ENCODE measurements at regions of chr19 and their contacts with region 1.

Region 1: GRCh38 chr19:20776083-20777076 is at the start of gene ZNF66:
- DNase-seq: peak; percentile 91
- H3K4me3 Mint-ChIP-seq: peak within 1 kb of the TSS; percentile 99
- H3K27ac Mint-ChIP-seq: peak within 1 kb of the TSS; percentile 96
- H3K4me1 Mint-ChIP-seq: no peaks in the 10 kb centered on the region
- H3K27me3 Mint-ChIP-seq: no peaks in the 10 kb centered on the region
- total RNA-seq, gene ZNF66: 8.4 and 9.2 TPM in 2 replicates

Region 2: DNA sequence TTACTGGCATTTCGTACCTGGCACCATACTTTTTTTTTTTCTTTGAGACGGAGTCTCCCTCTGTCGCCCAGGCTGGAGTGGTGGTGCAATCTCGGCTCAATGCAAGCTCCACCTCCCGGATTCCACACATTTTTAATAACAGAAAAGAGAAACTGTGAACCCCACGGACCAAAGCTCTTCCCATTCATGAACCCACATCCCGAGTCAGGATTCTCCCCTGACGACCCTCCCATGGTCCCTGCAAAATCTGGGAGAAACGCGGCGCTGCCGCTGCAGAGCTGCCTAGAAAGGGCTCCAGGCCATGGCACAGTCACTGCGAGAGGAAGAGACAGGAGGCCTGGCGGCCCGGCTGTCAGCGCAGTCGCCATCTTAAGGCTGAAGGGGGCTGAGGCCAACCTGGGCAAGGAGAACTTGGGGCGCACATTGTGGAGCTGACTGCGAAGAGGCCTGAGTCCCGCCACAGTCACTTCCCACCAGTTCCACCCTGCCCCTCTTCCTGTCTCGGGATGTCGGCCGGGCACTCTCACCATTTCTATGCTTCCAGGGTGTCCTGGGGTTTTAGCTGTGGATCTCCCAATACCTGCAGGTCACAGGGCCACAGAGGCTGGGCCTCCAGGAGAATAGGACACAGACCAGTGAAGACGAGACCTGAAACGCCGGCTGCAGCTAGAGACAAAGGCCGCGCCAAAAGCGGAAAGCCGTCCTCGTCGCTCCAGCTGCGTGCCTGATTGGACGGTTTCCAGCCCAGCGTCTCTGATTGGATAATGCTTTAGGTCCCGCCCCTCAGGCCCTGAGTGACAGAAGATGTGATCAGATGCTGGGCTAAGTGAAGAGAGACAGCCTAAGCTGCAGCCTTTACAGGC is 538.4 kb before region 1 on chr19:
- intact Hi-C with region 1: loop called (anchors 5 kb)
- DNase-seq: peak; percentile 72
- H3K4me3 Mint-ChIP-seq: peak overlapping the region; percentile 95
- H3K27ac Mint-ChIP-seq: peak overlapping the region; percentile 91
- H3K4me1 Mint-ChIP-seq: peaks cover 9% of the 10 kb centered on the region
- H3K27me3 Mint-ChIP-seq: no peaks in the 10 kb centered on the region

Region 3: GRCh38 chr19:20787766-20788165 is 11.4 kb after region 1 on chr19:
- intact Hi-C with region 1: no loop called
- DNase-seq: no peak
- H3K4me3 Mint-ChIP-seq: no peak overlapping the region
- H3K27ac Mint-ChIP-seq: no peak overlapping the region
- H3K4me1 Mint-ChIP-seq: no peaks in the 10 kb centered on the region
- H3K27me3 Mint-ChIP-seq: no peaks in the 10 kb centered on the region

Region 4: DNA sequence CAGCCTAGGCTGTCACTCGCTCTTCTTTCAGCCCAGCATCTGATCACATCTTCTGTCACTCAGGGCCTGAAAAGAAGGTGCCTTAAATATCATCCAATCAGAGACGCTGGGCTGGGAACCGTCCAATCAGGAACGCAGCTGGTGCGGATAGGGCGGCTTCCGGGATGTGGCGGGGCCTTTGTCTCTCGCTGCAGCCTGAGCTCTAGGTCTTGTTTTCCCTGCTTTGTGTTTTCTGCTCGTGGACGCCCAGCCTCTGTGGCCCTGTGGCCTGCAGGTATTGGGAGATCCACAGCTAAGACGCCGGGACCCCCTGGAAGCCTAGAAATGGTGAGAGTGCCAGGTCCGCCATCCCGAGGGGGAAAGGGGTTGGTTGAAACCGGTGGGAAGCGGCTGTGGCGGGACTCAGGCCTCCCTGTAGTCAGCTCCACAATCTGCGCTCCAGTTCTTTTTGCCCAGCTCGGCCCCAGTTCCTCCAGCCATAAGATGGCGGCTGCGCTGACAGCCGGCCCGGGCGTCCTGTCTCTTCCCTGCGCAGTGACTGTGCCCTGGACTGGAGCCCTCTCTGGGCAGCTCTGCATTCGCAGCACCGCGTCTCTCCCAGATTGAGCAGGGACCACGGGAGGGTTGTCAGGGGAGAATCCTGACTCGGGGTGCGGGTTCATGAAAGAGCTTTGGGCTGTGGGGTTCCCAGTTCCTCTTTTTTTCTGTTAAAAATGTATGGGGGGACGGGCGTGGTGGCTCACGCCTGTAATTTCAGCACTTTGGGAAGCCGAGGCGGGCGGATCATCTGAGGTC is 146.9 kb after region 1 on chr19 and contains the start of gene ZNF85:
- intact Hi-C with region 1: loop called (anchors 1 kb)
- DNase-seq: peak; percentile 85
- H3K4me3 Mint-ChIP-seq: peak within 1 kb of the TSS; percentile 94
- H3K27ac Mint-ChIP-seq: peak within 1 kb of the TSS; percentile 92
- H3K4me1 Mint-ChIP-seq: no peaks in the 10 kb centered on the region
- H3K27me3 Mint-ChIP-seq: no peaks in the 10 kb centered on the region
- total RNA-seq, gene ZNF85: 10.0 and 11.1 TPM in 2 replicates

Region 5: GRCh38 chr19:21020298-21021227 is 244.2 kb after region 1 on chr19 and contains the start of gene ZNF430:
- intact Hi-C with region 1: loop called (anchors 1 kb)
- DNase-seq: peak; percentile 93
- H3K4me3 Mint-ChIP-seq: peak within 1 kb of the TSS; percentile 99
- H3K27ac Mint-ChIP-seq: peak within 1 kb of the TSS; percentile 98
- H3K4me1 Mint-ChIP-seq: peaks cover 26% of the 10 kb centered on the region
- H3K27me3 Mint-ChIP-seq: peaks cover 2% of the 10 kb centered on the region
- total RNA-seq, gene ZNF430: 20.3 and 21.5 TPM in 2 replicates

Region 6: GRCh38 chr19:21396893-21397572 is 620.7 kb after region 1 on chr19 and contains the start of gene ZNF493:
- intact Hi-C with region 1: loop called (anchors 5 kb)
- DNase-seq: peak; percentile 87
- H3K4me3 Mint-ChIP-seq: peak within 1 kb of the TSS; percentile 97
- H3K27ac Mint-ChIP-seq: peak within 1 kb of the TSS; percentile 83
- H3K4me1 Mint-ChIP-seq: peaks cover 14% of the 10 kb centered on the region
- H3K27me3 Mint-ChIP-seq: no peaks in the 10 kb centered on the region
- total RNA-seq, gene ZNF493: 9.6 and 12.6 TPM in 2 replicates

Region 7: GRCh38 chr19:21851596-21852345 is 1075.4 kb after region 1 on chr19:
- intact Hi-C with region 1: loop called (anchors 5 kb)
- DNase-seq: peak; percentile 80
- H3K4me3 Mint-ChIP-seq: peak overlapping the region; percentile 90
- H3K27ac Mint-ChIP-seq: peak overlapping the region; percentile 87
- H3K4me1 Mint-ChIP-seq: peaks cover 21% of the 10 kb centered on the region
- H3K27me3 Mint-ChIP-seq: no peaks in the 10 kb centered on the region